ENCODE measurements at regions of chr20 and their contacts with region 1.

Region 1: DNA sequence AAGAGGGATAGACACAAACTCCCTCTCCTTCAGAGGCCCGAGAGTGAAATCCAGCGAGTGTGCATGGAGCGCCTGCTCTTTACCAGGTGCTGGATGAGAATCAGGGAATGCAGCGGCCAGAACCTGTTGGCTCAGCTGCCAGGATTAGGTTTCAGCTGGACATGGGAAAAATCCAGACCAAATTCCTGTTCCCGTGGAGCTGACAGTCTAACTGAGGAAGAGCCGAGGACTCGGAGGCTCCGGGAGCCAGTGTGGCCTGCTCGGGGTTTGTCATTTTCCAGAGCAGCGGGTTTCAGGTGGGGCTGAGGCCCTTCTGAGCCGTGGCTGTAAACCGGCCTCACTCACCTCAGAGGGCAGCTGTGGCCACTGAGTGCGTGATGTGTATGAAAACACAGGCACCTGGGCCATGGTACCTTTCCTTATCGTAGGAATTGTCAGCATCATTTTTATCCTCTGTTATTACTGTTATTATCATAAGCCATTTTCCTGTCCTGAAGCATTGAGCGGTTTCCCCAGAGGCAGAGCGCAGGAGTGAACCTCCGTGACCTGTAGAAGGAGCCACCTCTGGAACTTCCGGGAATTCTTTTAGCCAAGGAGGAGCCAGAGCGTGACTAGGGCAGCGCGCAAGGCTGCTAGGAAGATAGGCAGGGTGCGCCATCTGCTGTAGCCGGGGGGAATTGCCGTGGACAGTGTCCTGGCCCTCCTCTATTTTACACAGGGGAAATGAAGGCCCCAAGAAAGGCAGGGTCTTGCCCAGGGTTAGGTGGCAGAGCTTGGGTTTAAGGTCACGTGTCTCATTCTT is 27.3 kb downstream of the PKIG start:
- DNase-seq: peak; percentile 69
- H3K4me3 Mint-ChIP-seq: peak overlapping the region; percentile 39
- H3K27ac Mint-ChIP-seq: no peak overlapping the region
- H3K4me1 Mint-ChIP-seq: peaks cover 12% of the 10 kb centered on the region
- H3K27me3 Mint-ChIP-seq: no peaks in the 10 kb centered on the region

Region 2: GRCh38 chr20:44310664-44311639 is 298.8 kb before region 1 on chr20 and contains the start of gene FITM2:
- intact Hi-C with region 1: loop called (anchors 2 kb)
- DNase-seq: peak; percentile 97
- H3K4me3 Mint-ChIP-seq: peak within 1 kb of the TSS; percentile 86
- H3K27ac Mint-ChIP-seq: peak within 1 kb of the TSS; percentile 87
- H3K4me1 Mint-ChIP-seq: peaks cover 18% of the 10 kb centered on the region
- H3K27me3 Mint-ChIP-seq: peaks cover 4% of the 10 kb centered on the region
- total RNA-seq, gene FITM2: 2.2 TPM in 2 replicates

Region 3: DNA sequence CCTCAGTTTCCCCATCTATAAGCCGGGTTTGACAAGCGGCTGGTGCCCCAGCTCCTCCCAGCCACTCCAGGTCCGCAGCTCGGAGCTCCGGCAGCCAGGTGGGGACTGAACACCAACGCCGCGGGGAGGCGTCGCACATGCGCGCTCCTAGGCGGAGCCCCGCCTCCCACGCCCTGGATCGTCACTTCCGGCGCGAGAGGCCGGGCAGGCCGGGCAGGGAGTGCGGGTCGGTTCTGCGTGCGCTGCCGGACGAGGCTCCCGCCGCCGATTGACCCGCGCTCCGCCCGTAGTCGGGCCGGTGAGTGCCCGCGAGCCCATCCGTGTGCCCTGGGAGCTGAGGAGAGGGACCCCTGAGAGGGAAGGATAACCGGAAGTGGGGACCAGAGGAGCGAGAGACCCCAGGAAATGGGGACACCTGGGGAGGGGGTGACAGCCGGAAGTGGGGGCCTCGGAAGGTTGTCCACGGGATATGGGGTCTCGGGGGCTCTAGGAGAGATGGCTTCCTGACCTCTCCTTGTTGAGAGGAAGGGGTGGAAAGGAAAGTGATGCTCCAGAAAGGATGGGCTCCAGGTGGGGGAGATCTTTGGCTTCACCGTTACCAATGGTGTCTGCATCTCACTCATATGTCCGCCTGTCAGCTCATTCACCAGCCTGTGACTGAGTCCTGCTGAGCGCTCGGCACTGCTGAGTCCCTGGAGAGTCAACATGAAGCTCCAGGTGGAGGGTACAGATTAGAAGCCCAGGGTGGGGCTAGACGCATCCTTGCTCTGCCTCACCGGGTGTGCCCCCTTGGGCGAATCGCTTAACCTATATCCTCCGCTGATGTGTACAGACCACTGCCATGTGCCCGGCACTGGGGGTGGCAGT is 133.8 kb before region 1 on chr20 and contains the start of gene TTPAL:
- intact Hi-C with region 1: loop called (anchors 2 kb)
- DNase-seq: peak; percentile 90
- H3K4me3 Mint-ChIP-seq: peak within 1 kb of the TSS; percentile 95
- H3K27ac Mint-ChIP-seq: peak within 1 kb of the TSS; percentile 93
- H3K4me1 Mint-ChIP-seq: peaks cover 20% of the 10 kb centered on the region
- H3K27me3 Mint-ChIP-seq: peaks cover 3% of the 10 kb centered on the region
- total RNA-seq, gene TTPAL: 22.9 and 24.7 TPM in 2 replicates

Region 4: DNA sequence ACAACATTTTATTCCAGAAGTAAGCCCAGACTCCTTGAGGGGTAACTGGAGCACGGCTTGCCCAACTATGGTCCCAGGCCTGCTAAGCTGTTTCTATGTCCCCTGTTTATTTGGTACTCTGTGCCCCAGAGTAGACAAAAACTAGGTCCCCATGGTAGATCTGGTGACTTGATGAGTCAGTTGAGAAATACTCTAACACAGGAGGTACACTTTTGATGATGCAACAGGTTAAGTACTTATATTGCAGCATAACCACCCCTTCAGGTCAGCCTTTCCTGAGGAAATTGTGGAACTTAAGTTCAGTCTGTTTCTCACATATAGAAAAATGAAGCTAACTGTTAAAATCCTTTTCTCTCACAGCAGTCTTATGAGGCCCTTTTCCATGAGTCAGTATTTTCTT is 114.5 kb before region 1 on chr20:
- intact Hi-C with region 1: no loop called
- DNase-seq: no peak
- H3K4me3 Mint-ChIP-seq: no peak overlapping the region
- H3K27ac Mint-ChIP-seq: peak overlapping the region; percentile 64
- H3K4me1 Mint-ChIP-seq: peaks cover 30% of the 10 kb centered on the region
- H3K27me3 Mint-ChIP-seq: no peaks in the 10 kb centered on the region

Region 5: GRCh38 chr20:44532259-44532980 is 77.3 kb before region 1 on chr20:
- intact Hi-C with region 1: loop called (anchors 2 kb)
- DNase-seq: no peak
- H3K4me3 Mint-ChIP-seq: no peak overlapping the region
- H3K27ac Mint-ChIP-seq: no peak overlapping the region
- H3K4me1 Mint-ChIP-seq: no peaks in the 10 kb centered on the region
- H3K27me3 Mint-ChIP-seq: peaks cover 5% of the 10 kb centered on the region

Region 6: GRCh38 chr20:44738813-44739477 is 129.2 kb after region 1 on chr20:
- intact Hi-C with region 1: loop called (anchors 5 kb)
- DNase-seq: peak; percentile 63
- H3K4me3 Mint-ChIP-seq: peak overlapping the region; percentile 77
- H3K27ac Mint-ChIP-seq: peak overlapping the region; percentile 23
- H3K4me1 Mint-ChIP-seq: peaks cover 34% of the 10 kb centered on the region
- H3K27me3 Mint-ChIP-seq: peaks cover 4% of the 10 kb centered on the region